HCT116 (cell line): ENCODE measurements at regions of chr12 and their contacts with region 1.

Region 1: GRCh38 chr12:57452937-57453509 is 2.1 kb upstream of the INHBE start:
- DNase-seq: no peak
- ATAC-seq: peak; percentile 81
- H3K4me3 ChIP-seq: no peak overlapping the region
- H3K27ac ChIP-seq: no peak overlapping the region
- H3K4me1 ChIP-seq: peaks cover 21 to 34% of the 10 kb centered on the region in 2 experiments
- H3K27me3 ChIP-seq: no peaks in the 10 kb centered on the region
- CTCF ChIP-seq: peak in 2 of 3 experiments; percentile 94 to 96; a peak in 4 of 6 replicates
- POLR2A ChIP-seq: no peak
- RAD21 ChIP-seq: no peak

Region 2: DNA sequence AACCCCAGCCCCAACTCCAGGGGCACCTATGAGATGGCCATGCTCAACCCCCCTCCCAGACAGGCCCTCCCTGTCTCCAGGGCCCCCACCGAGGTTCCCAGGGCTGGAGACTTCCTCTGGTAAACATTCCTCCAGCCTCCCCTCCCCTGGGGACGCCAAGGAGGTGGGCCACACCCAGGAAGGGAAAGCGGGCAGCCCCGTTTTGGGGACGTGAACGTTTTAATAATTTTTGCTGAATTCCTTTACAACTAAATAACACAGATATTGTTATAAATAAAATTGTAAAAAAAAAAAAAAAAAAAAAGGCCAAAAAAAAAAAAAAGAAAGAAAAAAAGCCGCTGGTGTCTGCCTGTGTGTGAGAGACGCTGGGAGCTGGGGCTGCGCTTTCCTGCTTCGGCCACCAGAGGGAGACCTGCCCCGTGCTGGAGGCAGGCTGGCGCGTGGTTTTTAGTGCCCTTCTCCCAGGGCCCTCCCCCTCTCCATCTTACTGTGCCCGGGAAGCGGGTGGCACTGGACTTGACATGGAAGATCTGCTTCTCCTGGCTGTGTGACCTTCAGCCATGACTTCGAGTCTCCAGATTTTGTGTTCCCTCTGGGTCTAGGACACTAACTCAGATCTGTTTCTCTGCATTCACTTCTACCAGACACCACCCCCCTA is 239.8 kb before region 1 on chr12:
- CTCF ChIA-PET with region 1: interaction called, 27 read pairs
- POLR2A ChIA-PET with region 1: interaction called, 6 read pairs
- RAD21 ChIA-PET with region 1: no interaction called
- intact Hi-C with region 1: loop called (anchors 2 kb)
- DNase-seq: peak; percentile 59
- ATAC-seq: peak; percentile 62
- H3K4me3 ChIP-seq: no peak overlapping the region
- H3K27ac ChIP-seq: no peak overlapping the region
- H3K4me1 ChIP-seq: peaks cover 17 to 47% of the 10 kb centered on the region in 2 experiments
- H3K27me3 ChIP-seq: no peaks in the 10 kb centered on the region
- CTCF ChIP-seq: peak; percentile 86 to 97 (median 97)
- POLR2A ChIP-seq: no peak
- RAD21 ChIP-seq: peak; percentile 87

Region 3: DNA sequence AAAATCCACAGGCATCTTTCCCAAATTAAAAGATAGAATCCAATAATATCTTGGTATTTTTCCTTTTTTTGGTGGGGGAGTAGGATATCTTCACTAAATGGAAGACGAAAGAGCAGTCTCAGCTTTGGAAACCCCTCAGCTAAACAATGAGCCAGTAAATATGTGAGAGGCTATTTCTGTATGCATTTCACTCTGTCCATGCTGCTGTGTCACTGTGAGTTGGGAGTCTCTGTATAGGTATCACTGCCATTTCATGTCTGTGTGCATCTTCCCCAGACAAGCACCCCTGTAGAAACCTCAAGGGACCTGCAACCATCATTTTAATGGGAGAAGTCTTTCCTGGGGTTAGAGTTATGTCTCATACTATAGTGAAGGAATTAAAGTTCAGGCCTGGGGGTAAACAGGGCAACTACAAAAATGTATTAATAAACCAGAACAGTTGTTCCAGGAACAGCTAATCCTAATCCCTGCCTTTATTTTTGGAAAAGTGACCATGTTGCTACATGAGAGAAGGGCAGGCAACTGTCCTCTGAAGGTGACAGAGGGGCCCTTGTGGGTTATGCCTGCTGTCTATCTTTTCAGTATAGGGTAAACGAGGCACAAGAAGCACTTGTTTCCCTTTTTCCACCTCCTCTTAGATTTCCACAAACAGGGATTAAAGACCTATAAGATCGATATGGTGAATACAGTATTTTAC is 190.7 kb before region 1 on chr12:
- CTCF ChIA-PET with region 1: interaction called, 26 read pairs
- POLR2A ChIA-PET with region 1: no interaction called
- RAD21 ChIA-PET with region 1: interaction called, 5 to 8 read pairs
- intact Hi-C with region 1: loop called (anchors 1 kb)
- DNase-seq: no peak
- ATAC-seq: no peak
- H3K4me3 ChIP-seq: no peak overlapping the region
- H3K27ac ChIP-seq: no peak overlapping the region
- H3K4me1 ChIP-seq: peaks cover 3 to 4% of the 10 kb centered on the region in 2 experiments; a peak in 1 of 4 replicates
- H3K27me3 ChIP-seq: no peaks in the 10 kb centered on the region
- CTCF ChIP-seq: no peak
- POLR2A ChIP-seq: no peak
- RAD21 ChIP-seq: no peak

Region 4: GRCh38 chr12:57299514-57300016 is 153.5 kb before region 1 on chr12:
- CTCF ChIA-PET with region 1: interaction called, 11 read pairs
- POLR2A ChIA-PET with region 1: no interaction called
- RAD21 ChIA-PET with region 1: no interaction called
- intact Hi-C with region 1: no loop called
- DNase-seq: no peak
- ATAC-seq: peak; percentile 60; the same call in 1 of the 2 replicates
- H3K4me3 ChIP-seq: no peak overlapping the region
- H3K27ac ChIP-seq: no peak overlapping the region
- H3K4me1 ChIP-seq: peaks cover 14 to 15% of the 10 kb centered on the region in 2 experiments
- H3K27me3 ChIP-seq: no peaks in the 10 kb centered on the region
- CTCF ChIP-seq: no peak
- POLR2A ChIP-seq: no peak
- RAD21 ChIP-seq: no peak

Region 5: GRCh38 chr12:57309420-57309819 is 143.6 kb before region 1 on chr12:
- CTCF ChIA-PET with region 1: interaction called, 75 read pairs
- POLR2A ChIA-PET with region 1: interaction called, 5 read pairs
- RAD21 ChIA-PET with region 1: interaction called, 8 to 9 read pairs
- intact Hi-C with region 1: loop called (anchors 1 kb)
- DNase-seq: no peak
- ATAC-seq: no peak
- H3K4me3 ChIP-seq: no peak overlapping the region
- H3K27ac ChIP-seq: no peak overlapping the region
- H3K4me1 ChIP-seq: peaks cover 0 to 11% of the 10 kb centered on the region in 2 experiments; a peak in 2 of 4 replicates
- H3K27me3 ChIP-seq: no peaks in the 10 kb centered on the region
- CTCF ChIP-seq: no peak
- POLR2A ChIP-seq: no peak
- RAD21 ChIP-seq: no peak

Region 6: DNA sequence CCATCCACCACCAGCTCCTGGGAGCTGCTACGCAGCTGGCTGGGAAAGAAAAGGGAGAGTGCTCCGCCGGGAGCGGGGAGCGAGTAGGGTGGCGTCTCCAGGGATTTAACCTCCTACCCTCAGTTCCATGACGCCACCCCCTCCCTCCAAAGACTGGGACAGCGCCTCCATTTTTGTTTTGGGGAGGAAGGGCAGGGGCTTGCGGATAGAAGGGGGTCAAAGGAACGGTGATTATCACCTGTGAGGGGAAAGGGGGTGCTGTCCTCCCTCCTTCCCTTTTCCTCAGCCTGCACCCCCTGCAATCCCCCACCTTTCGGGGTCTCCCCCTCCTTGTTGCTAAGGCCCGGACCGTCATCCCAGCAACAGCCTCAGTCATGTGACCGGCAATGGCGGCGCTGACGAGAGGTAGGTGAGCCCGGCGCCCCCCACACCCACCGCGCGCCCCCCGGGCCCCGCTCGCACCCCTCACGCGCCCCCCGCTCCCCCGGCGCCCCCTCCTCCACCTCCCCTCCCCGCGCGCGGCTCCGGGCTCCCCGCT is 151.5 kb after region 1 on chr12 and contains the start of gene DTX3:
- CTCF ChIA-PET with region 1: no interaction called
- POLR2A ChIA-PET with region 1: no interaction called
- RAD21 ChIA-PET with region 1: no interaction called
- intact Hi-C with region 1: no loop called
- DNase-seq: no peak
- ATAC-seq: no peak
- H3K4me3 ChIP-seq: no peak within 1 kb of the TSS
- H3K27ac ChIP-seq: no peak within 1 kb of the TSS
- H3K4me1 ChIP-seq: peaks cover 2 to 6% of the 10 kb centered on the region in 2 experiments; a peak in 2 of 4 replicates
- H3K27me3 ChIP-seq: no peaks in the 10 kb centered on the region
- CTCF ChIP-seq: no peak
- POLR2A ChIP-seq: no peak
- RAD21 ChIP-seq: no peak
- total RNA-seq, gene DTX3: 0.37 TPM